GM13977 (cell line): ENCODE measurements at regions of chr4 and their contacts with region 1.

Region 1: GRCh38 chr4:76504613-76505465 is 69.8 kb downstream of the SHROOM3 start:
- DNase-seq: peak; percentile 52
- CTCF ChIP-seq: peak; percentile 56

Region 2: GRCh38 chr4:76430519-76431388 is 74.1 kb before region 1 on chr4:
- in situ Hi-C with region 1: loop called (anchors 5 kb)
- DNase-seq: peak; percentile 62
- CTCF ChIP-seq: peak; percentile 63

Region 3: DNA sequence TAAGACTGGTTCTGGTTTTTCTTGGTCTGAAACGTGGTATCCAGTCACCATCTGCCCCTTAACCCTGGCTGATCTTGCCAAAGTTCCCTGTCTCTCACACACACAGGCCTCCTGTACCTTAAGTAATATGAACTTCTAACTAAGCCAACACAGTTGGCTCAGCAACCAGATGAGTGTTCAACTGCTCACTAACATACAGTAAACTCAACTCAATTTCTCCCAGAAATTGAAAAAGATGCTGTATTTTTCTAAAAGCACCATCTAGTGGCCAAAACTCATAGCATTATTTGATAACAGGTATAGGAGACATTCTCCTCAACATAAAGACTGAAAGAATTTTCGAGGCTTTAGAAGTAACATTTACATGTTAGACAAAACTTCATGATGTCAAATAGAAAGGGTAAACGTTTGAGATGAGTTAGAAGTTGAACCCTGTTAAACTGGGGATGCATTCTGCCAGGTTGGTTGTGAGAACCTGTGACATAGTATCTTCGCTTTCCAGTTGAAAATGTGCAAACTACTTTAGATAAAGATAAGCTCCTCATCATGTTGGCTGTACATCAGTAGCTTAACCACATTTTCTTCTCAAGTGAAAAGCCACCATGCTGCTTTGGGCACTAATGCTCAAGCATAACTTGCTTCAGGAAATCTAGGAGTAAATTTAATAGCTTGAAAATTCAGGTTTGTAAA is 539.8 kb after region 1 on chr4:
- in situ Hi-C with region 1: loop called (anchors 25 kb)
- DNase-seq: peak; percentile 22
- CTCF ChIP-seq: peak; percentile 46

Region 4: DNA sequence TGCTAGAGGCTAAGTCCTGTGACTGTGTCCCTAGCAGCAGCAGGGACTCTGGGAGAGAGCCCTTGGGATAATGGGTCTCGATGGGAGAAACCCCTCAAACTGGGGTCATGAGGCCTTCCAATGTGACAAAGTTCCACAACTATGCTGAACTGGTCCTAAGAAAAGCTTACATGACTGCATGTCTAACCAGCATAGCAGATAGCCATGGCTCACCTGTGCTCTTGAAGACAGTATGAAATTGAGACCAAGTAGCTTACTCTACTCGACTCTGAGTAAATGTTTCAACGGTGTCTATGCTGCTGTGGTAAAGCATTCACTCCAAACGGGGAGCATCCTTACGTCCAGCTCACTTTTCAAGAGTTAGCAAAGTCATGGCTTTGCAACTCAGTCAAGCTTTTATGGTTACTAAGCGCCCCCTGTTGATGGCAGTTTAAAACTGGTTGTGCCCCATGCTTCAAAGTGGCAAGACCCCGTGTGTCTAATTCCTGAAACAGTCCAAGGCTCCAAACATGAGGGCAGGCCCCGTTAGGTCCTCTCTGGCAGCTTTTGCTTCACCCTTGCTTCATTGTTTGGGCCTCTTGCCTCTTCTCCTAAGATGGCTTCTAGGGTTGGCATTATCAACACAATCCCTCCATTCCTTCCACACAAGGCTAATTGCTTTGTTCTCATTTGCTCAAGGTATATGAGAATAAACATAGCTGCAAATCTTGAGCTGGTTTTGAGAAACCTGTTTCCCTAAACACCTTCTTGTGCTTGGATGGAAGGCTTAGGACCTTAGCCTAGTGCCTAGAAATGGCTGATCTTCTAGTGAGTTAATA is 698.8 kb after region 1 on chr4:
- in situ Hi-C with region 1: loop called (anchors 25 kb)
- DNase-seq: peak; percentile 56
- CTCF ChIP-seq: peak; percentile 84